ENCODE measurements at regions of chr1 and their contacts with region 1.

Region 1: GRCh38 chr1:210400043-210400840 is 71.5 kb downstream of the HHAT start:
- DNase-seq: peak; percentile 74
- ATAC-seq: peak; percentile 83
- H3K4me3 ChIP-seq: no peak overlapping the region
- H3K27ac ChIP-seq: peak overlapping the region; percentile 9; the same call in 1 of the 2 replicates
- H3K4me1 ChIP-seq: no peaks in the 10 kb centered on the region
- H3K27me3 ChIP-seq: no peaks in the 10 kb centered on the region
- CTCF ChIP-seq: peak; percentile 85 to 92 (median 85)
- EP300 ChIP-seq: no peak; a peak in 1 of 4 replicates
- POLR2A ChIP-seq: no peak
- RAD21 ChIP-seq: peak; percentile 89

Region 2: GRCh38 chr1:210151052-210151672 is 249.1 kb before region 1 on chr1:
- CTCF ChIA-PET with region 1: no interaction called
- POLR2A ChIA-PET with region 1: no interaction called
- RAD21 ChIA-PET with region 1: no interaction called
- SMC1A ChIA-PET with region 1: no interaction called
- in situ Hi-C with region 1: loop called (anchors 5 kb)
- intact Hi-C with region 1: no loop called
- DNase-seq: no peak
- ATAC-seq: no peak
- H3K4me3 ChIP-seq: no peak overlapping the region
- H3K27ac ChIP-seq: no peak overlapping the region
- H3K4me1 ChIP-seq: no peaks in the 10 kb centered on the region
- H3K27me3 ChIP-seq: no peaks in the 10 kb centered on the region
- CTCF ChIP-seq: no peak
- EP300 ChIP-seq: no peak
- POLR2A ChIP-seq: no peak
- RAD21 ChIP-seq: no peak

Region 3: DNA sequence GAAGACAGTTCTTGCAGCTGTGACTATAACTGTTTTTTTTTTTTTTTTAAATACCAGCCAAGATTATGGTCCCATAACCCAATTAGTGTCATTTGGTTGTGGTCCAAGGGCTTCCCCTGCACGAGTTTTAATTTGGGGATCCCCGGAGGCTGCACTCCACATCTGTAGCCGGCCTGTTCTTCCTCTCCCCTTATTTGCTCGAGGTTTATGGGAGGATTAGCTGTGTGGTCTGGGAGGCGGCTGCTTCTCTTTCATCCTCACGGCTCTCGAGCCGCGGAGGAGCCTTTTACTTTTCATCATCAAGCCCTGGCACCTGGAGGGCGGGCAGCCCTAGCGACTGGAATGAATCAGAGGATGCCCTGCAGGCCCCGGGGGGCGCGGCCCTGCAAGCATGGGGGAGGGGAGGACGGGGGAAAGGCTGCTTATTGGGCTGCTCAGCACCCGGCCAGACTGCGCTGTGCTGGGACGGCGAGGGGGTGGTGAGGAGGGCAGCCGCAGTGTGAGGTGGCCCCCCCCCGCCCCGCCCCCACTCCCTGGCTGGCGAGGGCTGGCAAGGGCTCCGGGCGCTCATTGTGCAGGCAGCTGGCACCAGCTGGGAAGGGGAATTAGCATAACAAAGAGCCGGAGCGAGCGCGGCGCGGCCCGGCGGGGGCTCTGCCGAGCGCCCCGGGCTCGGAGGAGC is 149.1 kb before region 1 on chr1:
- CTCF ChIA-PET with region 1: no interaction called
- POLR2A ChIA-PET with region 1: no interaction called
- RAD21 ChIA-PET with region 1: no interaction called
- SMC1A ChIA-PET with region 1: no interaction called
- in situ Hi-C with region 1: no loop called
- intact Hi-C with region 1: no loop called
- DNase-seq: no peak
- ATAC-seq: peak; percentile 70
- H3K4me3 ChIP-seq: no peak overlapping the region
- H3K27ac ChIP-seq: no peak overlapping the region
- H3K4me1 ChIP-seq: no peaks in the 10 kb centered on the region
- H3K27me3 ChIP-seq: peaks cover 15% of the 10 kb centered on the region in 2 experiments; a peak in 3 of 4 replicates
- CTCF ChIP-seq: no peak
- EP300 ChIP-seq: no peak
- POLR2A ChIP-seq: no peak
- RAD21 ChIP-seq: no peak

Region 4: GRCh38 chr1:210342986-210343780 is 57.1 kb before region 1 on chr1:
- CTCF ChIA-PET with region 1: interaction called, 22 read pairs
- POLR2A ChIA-PET with region 1: interaction called, 15 read pairs
- RAD21 ChIA-PET with region 1: interaction called, 43 read pairs
- SMC1A ChIA-PET with region 1: interaction called, 112 read pairs
- in situ Hi-C with region 1: no loop called
- intact Hi-C with region 1: no loop called
- DNase-seq: peak; percentile 72
- ATAC-seq: peak; percentile 75
- H3K4me3 ChIP-seq: peak overlapping the region; percentile 59
- H3K27ac ChIP-seq: peak overlapping the region; percentile 53
- H3K4me1 ChIP-seq: peaks cover 23% of the 10 kb centered on the region
- H3K27me3 ChIP-seq: no peaks in the 10 kb centered on the region
- CTCF ChIP-seq: no peak
- EP300 ChIP-seq: peak; percentile 70; a peak in 2 of 4 replicates
- POLR2A ChIP-seq: no peak
- RAD21 ChIP-seq: no peak

Region 5: DNA sequence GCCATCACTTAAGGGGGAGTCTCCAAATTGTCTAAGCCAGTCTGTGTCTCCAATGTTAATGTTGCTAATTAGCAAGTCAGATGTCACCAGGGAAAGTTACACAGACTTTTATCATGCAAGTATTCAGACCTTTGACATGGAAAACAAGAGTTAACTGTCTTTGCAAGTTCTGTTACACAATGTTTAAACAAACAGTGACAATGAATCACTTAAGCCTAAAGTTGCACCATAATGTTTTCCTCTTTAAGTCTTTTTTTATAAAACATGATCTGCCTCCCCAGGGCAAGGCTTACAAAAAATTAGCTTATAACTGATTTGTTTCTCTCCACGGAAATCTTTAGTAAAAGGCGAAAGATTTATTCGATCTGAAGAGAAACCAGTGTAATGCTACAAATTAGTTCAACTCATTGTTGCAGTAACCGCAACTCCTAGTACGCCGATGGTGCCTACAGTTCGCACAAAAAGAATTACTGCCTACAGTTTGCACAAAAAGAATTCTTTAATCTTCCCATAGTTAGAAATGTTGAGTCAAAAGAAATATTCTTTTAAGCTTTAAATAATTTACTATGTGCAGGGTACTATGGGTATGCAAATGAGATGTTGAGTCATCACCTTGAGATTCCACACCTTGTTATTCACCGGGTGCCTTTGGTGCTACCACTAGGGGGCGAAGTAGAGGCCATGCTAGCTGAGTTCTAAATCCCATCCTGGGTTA is 26.2 kb before region 1 on chr1:
- CTCF ChIA-PET with region 1: interaction called, 379 read pairs
- POLR2A ChIA-PET with region 1: interaction called, 224 read pairs
- RAD21 ChIA-PET with region 1: interaction called, 415 read pairs
- SMC1A ChIA-PET with region 1: interaction called, 683 read pairs
- in situ Hi-C with region 1: no loop called
- intact Hi-C with region 1: loop called (anchors 1 kb)
- DNase-seq: peak; percentile 81
- ATAC-seq: peak; percentile 84
- H3K4me3 ChIP-seq: no peak overlapping the region
- H3K27ac ChIP-seq: peak overlapping the region; percentile 40; the same call in 1 of the 2 replicates
- H3K4me1 ChIP-seq: no peaks in the 10 kb centered on the region
- H3K27me3 ChIP-seq: no peaks in the 10 kb centered on the region
- CTCF ChIP-seq: peak; percentile 81 to 90 (median 87)
- EP300 ChIP-seq: no peak
- POLR2A ChIP-seq: peak; percentile 82
- RAD21 ChIP-seq: peak; percentile 38

Region 6: GRCh38 chr1:210448297-210448892 is 48.2 kb after region 1 on chr1:
- CTCF ChIA-PET with region 1: interaction called, 53 read pairs
- POLR2A ChIA-PET with region 1: interaction called, 5 read pairs
- RAD21 ChIA-PET with region 1: interaction called, 17 read pairs
- SMC1A ChIA-PET with region 1: interaction called, 42 read pairs
- in situ Hi-C with region 1: no loop called
- intact Hi-C with region 1: no loop called
- DNase-seq: no peak
- ATAC-seq: peak; percentile 81
- H3K4me3 ChIP-seq: no peak overlapping the region
- H3K27ac ChIP-seq: no peak overlapping the region
- H3K4me1 ChIP-seq: no peaks in the 10 kb centered on the region
- H3K27me3 ChIP-seq: no peaks in the 10 kb centered on the region
- CTCF ChIP-seq: peak; percentile 49 to 59 (median 54)
- EP300 ChIP-seq: no peak
- POLR2A ChIP-seq: no peak
- RAD21 ChIP-seq: peak; percentile 60

Region 7: DNA sequence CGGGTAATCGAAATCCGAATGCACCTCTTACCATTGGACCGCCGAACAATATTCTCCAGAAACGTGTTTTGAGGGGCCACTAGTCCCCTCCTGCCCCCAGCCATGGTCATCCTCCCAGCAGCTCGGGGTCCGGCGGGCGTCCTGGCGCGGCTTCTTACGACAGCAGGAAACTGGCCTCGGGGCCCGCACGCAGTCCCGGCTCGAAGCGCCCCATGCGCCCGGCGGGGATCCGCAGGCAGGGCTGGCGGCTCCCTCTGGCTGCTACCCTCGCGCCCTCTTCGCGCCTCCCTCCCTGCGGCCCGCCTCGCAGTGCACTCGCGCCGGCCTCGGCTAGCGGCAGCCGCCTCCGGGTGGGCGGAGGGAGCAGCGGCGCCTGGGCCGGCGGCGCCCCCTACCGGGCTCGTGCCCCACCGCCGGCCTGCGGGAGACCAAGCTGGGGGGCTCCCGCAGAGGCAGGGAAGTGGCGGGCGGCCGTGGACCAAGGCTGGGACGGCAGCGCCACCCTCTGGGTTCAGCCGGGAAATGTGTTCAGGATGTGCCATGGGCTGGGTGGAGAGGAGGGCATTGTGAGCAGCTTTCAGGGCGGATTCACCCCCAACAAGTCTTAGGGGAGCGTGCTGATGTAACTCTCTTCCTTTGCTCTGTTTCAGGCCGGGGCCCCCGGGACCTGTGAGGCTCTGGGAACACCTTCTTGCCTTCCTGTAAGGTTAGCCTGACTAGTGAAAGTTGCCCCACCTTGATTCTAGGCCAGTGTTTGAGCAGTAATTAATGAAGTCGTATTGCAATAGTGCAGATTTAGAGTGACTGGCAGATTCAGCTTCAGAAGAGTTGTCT is 733.8 kb after region 1 on chr1 and contains the start of gene KCNH1:
- CTCF ChIA-PET with region 1: interaction called, 45 read pairs
- POLR2A ChIA-PET with region 1: no interaction called
- RAD21 ChIA-PET with region 1: interaction called, 48 read pairs
- SMC1A ChIA-PET with region 1: interaction called, 3 read pairs
- in situ Hi-C with region 1: loop called (anchors 5 kb)
- intact Hi-C with region 1: no loop called
- DNase-seq: peak; percentile 7
- ATAC-seq: peak; percentile 97
- H3K4me3 ChIP-seq: no peak within 1 kb of the TSS
- H3K27ac ChIP-seq: no peak within 1 kb of the TSS
- H3K4me1 ChIP-seq: no peaks in the 10 kb centered on the region
- H3K27me3 ChIP-seq: peaks cover 0 to 4% of the 10 kb centered on the region in 2 experiments; a peak in 2 of 4 replicates
- CTCF ChIP-seq: peak; percentile 69 to 83 (median 81)
- EP300 ChIP-seq: no peak
- POLR2A ChIP-seq: no peak
- RAD21 ChIP-seq: peak; percentile 63
- polyA plus RNA-seq, gene KCNH1: 0.02 TPM in 1 of 2 experiments, not detected in the other